Mammary epithelial cell (primary cell): ENCODE measurements at regions of chr5 and their contacts with region 1.

Region 1: DNA sequence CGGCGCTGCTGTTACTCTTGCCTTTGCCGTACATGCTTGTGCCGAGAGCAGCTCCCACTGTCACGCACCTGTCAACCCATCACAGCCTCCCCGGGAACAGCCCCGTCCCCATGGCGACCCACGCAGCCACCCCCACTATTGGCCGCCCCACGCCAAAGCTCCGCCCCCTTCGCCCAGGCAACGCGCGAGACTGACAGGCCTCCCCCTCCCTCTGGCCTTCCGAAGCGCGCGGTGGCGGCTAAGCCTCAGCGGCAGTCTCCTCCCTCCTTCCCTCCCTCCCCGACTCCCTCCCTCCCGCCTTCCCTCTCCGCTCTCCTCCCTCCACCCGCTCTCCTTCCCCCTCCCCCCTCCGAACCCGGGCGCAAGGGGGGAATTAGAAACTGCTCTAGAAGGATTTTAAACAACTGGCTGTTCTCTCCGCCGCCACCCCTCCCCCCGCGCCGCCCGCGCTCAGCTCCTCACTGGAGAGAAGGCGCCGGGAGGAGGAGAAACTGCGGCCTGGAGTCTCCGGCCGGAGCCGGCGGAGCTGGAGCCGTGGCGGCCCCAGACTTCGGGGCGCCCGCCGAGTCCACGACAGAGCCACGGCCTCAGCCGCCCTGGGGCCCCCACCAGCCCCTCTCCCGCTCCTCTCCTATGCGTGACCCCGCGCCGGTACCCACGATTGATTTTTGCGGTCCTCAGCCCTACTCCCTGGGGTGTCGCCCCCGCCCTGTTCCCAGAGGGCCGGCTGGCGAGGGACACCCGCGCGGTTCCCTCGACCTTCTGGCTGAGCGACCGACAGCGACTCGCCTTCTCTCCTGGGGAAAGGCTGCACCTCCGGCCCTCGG is at the start of gene SSBP2:
- DNase-seq: peak; percentile 99
- H3K4me3 ChIP-seq: peak within 1 kb of the TSS; percentile 82 to 96 (median 90)
- H3K27ac ChIP-seq: peak within 1 kb of the TSS; percentile 81
- H3K4me1 ChIP-seq: peaks cover 36% of the 10 kb centered on the region
- H3K27me3 ChIP-seq: no peaks in the 10 kb centered on the region
- CTCF ChIP-seq: no peak
- total RNA-seq, gene SSBP2: 24.8 to 40.8 TPM

Region 2: DNA sequence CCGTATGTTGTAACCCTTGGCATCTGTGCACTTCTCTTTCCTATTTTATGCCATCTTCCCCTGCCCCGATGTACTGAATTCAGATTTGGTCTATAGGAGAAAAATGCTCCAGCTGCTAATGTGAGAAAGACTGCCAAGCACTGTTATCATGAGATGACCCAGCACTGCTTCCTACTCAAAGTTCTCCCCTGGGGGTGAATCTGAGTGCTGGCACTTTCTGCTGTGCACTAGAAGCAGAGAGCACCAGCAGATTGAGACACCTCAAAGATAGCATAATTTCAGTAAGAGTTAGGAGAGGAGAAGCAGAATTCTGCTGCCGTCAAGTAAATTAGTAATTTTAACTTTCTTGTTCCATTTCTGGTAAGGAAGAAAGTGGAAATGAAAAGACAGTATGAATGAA is 264.5 kb before region 1 on chr5:
- CTCF ChIA-PET with region 1: no interaction called
- dilution Hi-C with region 1: no loop called
- in situ Hi-C with region 1: no loop called
- intact Hi-C with region 1: no loop called
- DNase-seq: no peak
- H3K4me3 ChIP-seq: no peak overlapping the region
- H3K27ac ChIP-seq: no peak overlapping the region
- H3K4me1 ChIP-seq: no peaks in the 10 kb centered on the region
- H3K27me3 ChIP-seq: no peaks in the 10 kb centered on the region
- CTCF ChIP-seq: no peak

Region 3: DNA sequence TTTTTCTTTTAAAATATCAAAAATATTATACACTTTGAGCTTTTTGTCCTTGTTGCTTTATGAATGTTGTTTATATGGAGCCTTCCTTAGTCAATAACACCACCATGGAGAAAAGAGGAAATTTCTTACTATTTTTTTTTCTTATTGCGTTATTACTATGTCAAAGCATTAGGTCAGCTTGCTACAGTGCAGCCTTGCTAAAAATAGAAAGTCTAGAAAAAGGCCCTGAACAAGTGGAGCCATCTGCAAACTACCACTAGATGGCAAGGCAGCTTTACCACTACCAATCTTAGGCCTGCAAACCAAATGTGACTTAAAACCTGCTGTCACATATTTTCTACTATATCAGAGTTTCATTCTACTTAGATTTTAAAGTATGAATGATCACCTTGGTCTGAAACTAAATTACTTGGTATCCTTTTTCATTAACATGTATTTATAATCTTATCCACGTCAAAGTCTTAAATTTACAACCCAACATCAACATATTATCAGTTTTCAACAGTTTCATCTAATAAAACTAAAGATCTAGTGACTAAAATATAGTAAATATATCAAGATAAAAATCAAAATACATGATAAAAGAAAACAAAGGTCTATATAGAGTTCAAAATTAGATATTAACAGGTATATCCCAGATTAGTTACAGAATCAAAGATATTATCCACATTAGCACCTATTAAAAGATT is 244.2 kb before region 1 on chr5:
- CTCF ChIA-PET with region 1: no interaction called
- dilution Hi-C with region 1: no loop called
- in situ Hi-C with region 1: no loop called
- intact Hi-C with region 1: loop called (anchors 1 kb)
- DNase-seq: peak; percentile 66
- H3K4me3 ChIP-seq: no peak overlapping the region
- H3K27ac ChIP-seq: no peak overlapping the region
- H3K4me1 ChIP-seq: no peaks in the 10 kb centered on the region
- H3K27me3 ChIP-seq: no peaks in the 10 kb centered on the region
- CTCF ChIP-seq: peak; percentile 87 to 88

Region 4: GRCh38 chr5:81525690-81526089 is 225.5 kb before region 1 on chr5:
- CTCF ChIA-PET with region 1: no interaction called
- dilution Hi-C with region 1: no loop called
- in situ Hi-C with region 1: loop called in 1 of 2 experiments (anchors 25 kb)
- intact Hi-C with region 1: no loop called
- DNase-seq: no peak
- H3K4me3 ChIP-seq: no peak overlapping the region
- H3K27ac ChIP-seq: no peak overlapping the region
- H3K4me1 ChIP-seq: no peaks in the 10 kb centered on the region
- H3K27me3 ChIP-seq: no peaks in the 10 kb centered on the region
- CTCF ChIP-seq: no peak

Region 5: DNA sequence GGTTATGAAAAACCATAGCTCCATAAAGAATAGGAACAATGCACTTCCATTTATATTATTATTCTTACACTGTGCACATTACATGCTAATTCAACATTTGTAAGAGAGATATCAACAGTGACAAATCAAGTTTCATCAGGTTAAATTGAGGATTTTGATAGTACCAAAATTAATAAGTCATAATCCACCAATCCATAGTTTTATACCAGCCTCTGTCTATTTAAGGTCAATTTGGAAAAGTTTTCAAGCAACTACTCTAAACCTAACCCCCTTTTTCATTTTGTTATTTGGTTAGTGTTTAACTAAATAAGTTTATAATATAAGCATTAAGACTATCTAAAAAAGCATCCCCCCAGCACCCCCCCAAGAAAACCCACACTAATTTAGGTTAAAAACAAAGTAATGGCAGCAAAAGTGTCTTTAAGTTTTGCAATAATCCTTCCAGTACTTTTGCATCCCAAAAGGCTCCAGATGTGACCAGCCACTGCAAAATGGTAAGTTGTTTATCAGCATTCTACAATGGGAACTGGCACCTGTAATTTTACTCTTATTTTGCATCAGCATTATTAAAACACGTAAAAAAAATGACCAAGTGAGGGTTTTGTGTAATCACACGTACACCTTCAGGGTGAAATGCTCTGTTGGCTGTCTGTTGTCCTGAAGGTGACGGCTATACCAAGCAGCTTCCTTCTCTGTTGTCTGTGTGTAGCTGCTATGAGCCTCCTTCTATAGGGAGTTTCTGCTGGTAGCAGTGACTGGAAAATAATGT is 36.4 kb after region 1 on chr5:
- CTCF ChIA-PET with region 1: interaction called, 8 read pairs
- dilution Hi-C with region 1: no loop called
- in situ Hi-C with region 1: loop called in 1 of 2 experiments (anchors 5 kb)
- intact Hi-C with region 1: loop called (anchors 1 kb)
- DNase-seq: peak; percentile 66
- H3K4me3 ChIP-seq: no peak overlapping the region
- H3K27ac ChIP-seq: peak overlapping the region; percentile 43
- H3K4me1 ChIP-seq: peaks cover 41% of the 10 kb centered on the region
- H3K27me3 ChIP-seq: no peaks in the 10 kb centered on the region
- CTCF ChIP-seq: no peak

Region 6: DNA sequence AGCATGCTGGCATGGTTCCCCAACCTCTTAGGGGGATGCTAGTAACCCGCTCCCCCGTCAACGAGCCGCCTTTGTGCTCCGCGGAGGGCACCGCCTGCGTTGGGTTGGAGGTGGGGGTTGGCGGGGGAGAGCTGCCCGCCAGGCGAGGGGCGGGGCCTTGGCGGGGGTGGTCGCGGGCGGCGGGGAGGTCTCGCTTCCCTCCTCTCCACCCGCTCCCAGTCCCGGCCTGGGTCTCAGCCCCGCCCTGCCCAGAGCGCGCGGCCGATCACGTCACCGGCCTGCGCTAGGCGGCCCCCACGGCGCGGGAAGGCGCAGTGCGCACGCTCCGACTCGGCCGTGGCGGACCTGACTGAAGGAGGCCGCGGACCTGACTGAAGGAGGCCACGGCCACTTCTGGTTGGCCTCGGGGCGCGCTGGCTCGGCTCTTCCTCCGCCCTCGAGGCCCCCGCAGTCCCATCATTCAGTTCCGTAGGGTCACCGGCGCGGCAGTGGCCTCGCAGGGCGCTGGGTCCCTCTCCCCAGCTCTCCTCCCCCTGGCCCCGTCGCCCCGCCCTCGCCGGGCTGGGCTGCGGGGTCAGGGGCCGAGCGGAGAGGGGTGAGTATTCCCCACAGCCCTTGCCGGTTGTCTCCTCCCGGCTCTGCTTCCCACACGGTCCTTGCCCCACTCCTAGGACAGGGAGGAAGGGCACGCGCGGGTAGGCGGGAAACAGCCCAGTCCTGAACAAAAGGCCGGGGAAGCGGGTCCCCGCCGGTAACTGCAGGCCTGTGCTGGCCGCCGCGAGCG is 220.7 kb after region 1 on chr5 and contains the start of gene ATG10:
- CTCF ChIA-PET with region 1: no interaction called
- dilution Hi-C with region 1: no loop called
- in situ Hi-C with region 1: no loop called
- intact Hi-C with region 1: loop called (anchors 1 kb)
- DNase-seq: peak; percentile 86
- H3K4me3 ChIP-seq: peak within 1 kb of the TSS; percentile 65 to 81 (median 65)
- H3K27ac ChIP-seq: peak within 1 kb of the TSS; percentile 92
- H3K4me1 ChIP-seq: peaks cover 4% of the 10 kb centered on the region
- H3K27me3 ChIP-seq: no peaks in the 10 kb centered on the region
- CTCF ChIP-seq: no peak
- total RNA-seq, gene ATG10: 7.2 to 12.2 TPM